ENCODE measurements at regions of chr17 and their contacts with region 1.

Region 1: GRCh38 chr17:77088455-77089123 is 52.2 kb upstream of the SEC14L1 start:
- DNase-seq: peak; percentile 93
- ATAC-seq: peak; percentile 94
- H3K4me3 ChIP-seq: peak overlapping the region; percentile 81
- H3K27ac ChIP-seq: peak overlapping the region; percentile 92
- H3K4me1 ChIP-seq: peaks cover 58% of the 10 kb centered on the region
- H3K27me3 ChIP-seq: peaks cover 5% of the 10 kb centered on the region
- CTCF ChIP-seq: peak; percentile 80

Region 2: DNA sequence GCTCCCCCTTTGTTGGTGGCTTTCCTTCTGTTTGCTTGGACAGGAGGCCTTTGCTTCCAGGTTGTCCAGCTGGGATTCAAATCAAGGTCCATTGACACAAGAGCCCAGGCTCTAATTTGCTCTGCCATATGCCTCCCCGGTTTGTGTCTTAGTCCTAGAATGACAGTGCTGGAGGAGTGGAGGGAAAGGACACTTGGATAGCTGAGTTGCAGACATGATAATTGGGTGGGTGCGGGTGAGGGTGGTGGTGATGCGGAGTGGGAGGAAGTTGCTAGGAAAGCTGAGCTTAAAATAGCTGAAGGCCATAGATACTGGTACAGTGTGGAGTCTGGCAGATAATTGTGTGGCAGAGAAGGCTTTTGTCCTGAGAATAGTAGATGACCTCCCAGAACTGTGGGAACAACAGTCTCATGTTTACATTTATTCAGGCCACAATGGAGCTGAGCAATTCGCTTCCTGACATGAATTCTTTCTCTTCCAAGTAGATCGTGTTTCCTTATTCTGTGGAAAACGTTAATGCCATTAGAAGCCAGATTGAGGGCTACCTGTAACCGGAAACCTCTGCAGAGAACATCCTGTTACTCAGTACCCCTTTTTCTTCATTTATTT is 76.0 kb after region 1 on chr17:
- intact Hi-C with region 1: no loop called
- DNase-seq: no peak
- ATAC-seq: peak; percentile 28 to 55
- H3K4me3 ChIP-seq: no peak overlapping the region
- H3K27ac ChIP-seq: peak overlapping the region; percentile 59
- H3K4me1 ChIP-seq: peaks cover 64% of the 10 kb centered on the region
- H3K27me3 ChIP-seq: no peaks in the 10 kb centered on the region
- CTCF ChIP-seq: no peak

Region 3: DNA sequence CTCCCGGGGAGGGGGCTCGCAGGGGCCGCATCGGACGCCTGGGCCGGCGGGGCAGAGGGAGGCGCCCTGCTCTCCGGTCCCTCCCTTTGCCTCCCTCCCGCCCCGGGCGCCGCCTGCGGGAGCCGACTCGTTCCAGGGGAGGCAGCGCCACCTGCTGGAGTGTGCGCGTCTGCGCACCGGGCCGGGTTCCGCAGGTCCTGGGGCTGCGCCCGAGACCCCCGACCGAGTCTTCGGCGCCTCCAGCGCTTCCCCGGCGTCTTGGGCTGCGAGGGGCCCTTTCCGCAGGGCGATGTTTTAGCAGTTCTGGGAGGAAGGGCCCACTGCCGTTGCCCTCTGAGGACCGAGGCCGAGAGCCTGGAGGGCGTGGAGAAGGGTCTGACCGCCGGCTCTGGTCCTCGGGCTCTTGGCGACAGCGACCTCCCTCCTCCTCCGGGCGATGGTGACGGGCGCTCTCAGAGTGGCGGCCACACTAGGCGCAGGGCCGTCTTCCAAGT is 158.5 kb after region 1 on chr17:
- intact Hi-C with region 1: loop called (anchors 5 kb)
- DNase-seq: peak; percentile 91
- ATAC-seq: peak; percentile 96 to 97
- H3K4me3 ChIP-seq: peak overlapping the region; percentile 64
- H3K27ac ChIP-seq: peak overlapping the region; percentile 64
- H3K4me1 ChIP-seq: peaks cover 6% of the 10 kb centered on the region
- H3K27me3 ChIP-seq: peaks cover 9% of the 10 kb centered on the region
- CTCF ChIP-seq: peak; percentile 98